ENCODE measurements at regions of chr3 and their contacts with region 1.

Region 1: DNA sequence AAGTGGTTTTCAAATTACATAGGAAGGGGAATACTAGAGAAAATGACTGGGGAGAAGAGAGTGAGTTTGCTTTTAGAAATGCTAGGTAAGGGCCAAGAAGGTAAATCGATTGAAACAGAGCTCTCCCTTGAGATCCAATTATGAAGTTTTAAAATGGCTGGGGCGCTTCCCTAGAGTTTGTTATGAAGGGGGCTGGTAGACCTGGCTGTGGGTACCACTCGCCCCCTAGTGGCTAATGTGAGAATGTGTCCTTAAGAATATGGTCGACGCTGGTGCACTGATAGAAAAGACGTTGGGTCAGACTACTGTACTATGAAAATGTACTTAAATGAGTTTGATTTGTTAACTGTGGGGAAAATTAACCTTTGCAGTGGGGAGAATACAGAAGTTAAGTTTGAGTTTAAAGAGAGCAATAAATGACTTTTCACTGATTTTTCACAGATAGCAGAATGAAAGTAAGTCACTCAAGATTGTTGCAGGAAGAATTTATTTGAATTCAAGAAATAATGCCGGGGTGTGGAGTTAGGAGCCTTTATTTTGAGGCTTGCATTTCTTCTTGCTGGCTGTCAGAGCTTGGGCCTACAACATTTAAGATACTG is 9.2 kb downstream of the TMPRSS7 start:
- DNase-seq: peak in 7 of 10 donors; percentile 11 to 90 (median 40)

Region 2: DNA sequence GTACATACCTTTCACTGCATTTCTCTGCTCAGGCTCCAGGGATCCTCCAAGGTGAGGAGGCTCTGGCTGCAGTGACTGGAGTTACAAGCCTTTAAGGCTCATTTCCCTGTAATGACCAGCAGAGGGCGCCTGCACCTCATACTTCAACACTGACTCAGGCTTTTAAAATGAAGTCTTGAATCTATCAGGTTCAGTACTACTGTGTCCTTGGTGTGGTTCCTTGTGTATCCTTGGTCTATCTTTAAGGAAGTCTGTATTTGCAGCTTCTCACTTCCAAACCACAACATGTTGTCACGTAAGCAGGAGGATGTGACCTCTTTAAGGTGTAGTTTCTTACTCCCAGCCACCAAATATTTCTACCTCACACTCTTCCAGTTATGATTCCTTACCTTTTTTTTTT is 326.1 kb before region 1 on chr3:
- intact Hi-C with region 1: loop called (anchors 10 kb)
- DNase-seq: peak; percentile 44 to 96 (median 71)

Region 3: GRCh38 chr3:111989061-111989678 is 54.5 kb before region 1 on chr3:
- intact Hi-C with region 1: loop called (anchors 2 kb)
- DNase-seq: no peak

Region 4: GRCh38 chr3:112253301-112253971 is 209.7 kb after region 1 on chr3:
- intact Hi-C with region 1: no loop called
- DNase-seq: no peak

Measured in posterior cingulate gyrus (tissue), 11 donors.